ENCODE measurements at regions of chr3 and their contacts with region 1.

Region 1: GRCh38 chr3:138180375-138181029 is 5.8 kb upstream of the DBR1 start:
- DNase-seq: no peak
- ATAC-seq: peak; percentile 94
- H3K4me3 ChIP-seq: no peak overlapping the region
- H3K27ac ChIP-seq: no peak overlapping the region
- H3K4me1 ChIP-seq: no peaks in the 10 kb centered on the region
- H3K27me3 ChIP-seq: peaks cover 0 to 2% of the 10 kb centered on the region in 2 experiments; a peak in 1 of 4 replicates
- CTCF ChIP-seq: peak; percentile 53 to 82 (median 53); a peak in 4 of 6 replicates
- EP300 ChIP-seq: no peak
- POLR2A ChIP-seq: no peak
- RAD21 ChIP-seq: peak; percentile 87

Region 2: DNA sequence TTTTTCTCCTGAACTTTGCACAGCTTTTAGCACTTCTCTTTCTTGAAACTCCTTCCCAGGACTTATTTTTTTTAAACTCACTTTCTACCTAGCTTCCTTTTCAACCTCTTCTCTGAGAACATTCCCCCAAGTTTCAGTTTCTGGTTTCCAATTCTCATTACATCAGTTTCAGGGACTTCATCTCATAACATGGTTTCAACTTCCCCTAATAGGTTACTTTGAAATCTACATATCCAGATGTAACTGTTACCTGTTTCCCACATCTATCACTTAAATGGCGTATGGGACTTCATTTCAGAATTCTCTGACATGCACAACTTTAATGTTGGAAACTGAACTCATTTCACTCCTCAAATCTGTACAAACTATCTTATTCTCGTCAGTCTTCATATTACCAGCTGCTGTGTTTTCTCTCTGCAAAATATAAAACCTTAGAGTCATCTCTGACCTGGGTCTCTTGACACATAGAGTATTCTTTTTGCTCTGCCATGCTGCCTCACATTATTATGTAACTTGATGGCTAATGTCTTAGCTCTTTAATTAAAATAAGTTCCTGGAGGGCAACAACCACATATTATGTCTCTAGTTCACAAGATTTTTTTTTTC is 90.8 kb after region 1 on chr3:
- CTCF ChIA-PET with region 1: no interaction called
- POLR2A ChIA-PET with region 1: no interaction called
- RAD21 ChIA-PET with region 1: no interaction called
- SMC1A ChIA-PET with region 1: interaction called, 5 read pairs
- in situ Hi-C with region 1: no loop called
- intact Hi-C with region 1: loop called (anchors 5 kb)
- DNase-seq: peak; percentile 24
- ATAC-seq: peak; percentile 81
- H3K4me3 ChIP-seq: no peak overlapping the region
- H3K27ac ChIP-seq: peak overlapping the region; percentile 31; the same call in 1 of the 2 replicates
- H3K4me1 ChIP-seq: peaks cover 11% of the 10 kb centered on the region
- H3K27me3 ChIP-seq: no peaks in the 10 kb centered on the region
- CTCF ChIP-seq: no peak
- EP300 ChIP-seq: no peak
- POLR2A ChIP-seq: no peak
- RAD21 ChIP-seq: no peak

Region 3: DNA sequence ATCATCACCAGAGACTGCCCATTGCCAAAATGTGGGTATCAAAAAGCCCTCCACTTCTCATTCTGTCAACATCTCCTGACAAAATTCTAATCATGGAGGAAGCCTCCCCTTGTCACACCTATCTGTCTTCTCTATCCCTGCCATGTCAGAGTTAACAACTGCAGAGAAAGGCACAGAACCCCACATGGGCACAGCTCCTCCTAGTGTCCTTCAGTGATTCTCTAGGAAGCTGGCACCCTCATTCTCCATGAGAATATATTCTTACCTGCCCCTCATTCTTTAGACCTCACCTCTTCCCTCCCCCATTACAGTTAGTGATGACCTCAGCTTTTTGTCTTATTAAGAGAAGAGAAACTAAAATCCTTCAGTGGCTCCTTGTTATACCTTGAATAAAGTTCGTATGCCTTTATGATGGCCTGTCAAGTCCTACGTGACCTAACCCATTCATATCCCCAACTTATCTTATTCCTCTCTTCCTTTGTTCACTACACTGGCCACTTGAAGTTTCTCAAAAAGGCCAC is 104.5 kb after region 1 on chr3:
- CTCF ChIA-PET with region 1: interaction called, 11 read pairs
- POLR2A ChIA-PET with region 1: no interaction called
- RAD21 ChIA-PET with region 1: no interaction called
- SMC1A ChIA-PET with region 1: interaction called, 3 read pairs
- in situ Hi-C with region 1: no loop called
- intact Hi-C with region 1: no loop called
- DNase-seq: no peak
- ATAC-seq: no peak
- H3K4me3 ChIP-seq: no peak overlapping the region
- H3K27ac ChIP-seq: no peak overlapping the region
- H3K4me1 ChIP-seq: no peaks in the 10 kb centered on the region
- H3K27me3 ChIP-seq: no peaks in the 10 kb centered on the region
- CTCF ChIP-seq: peak in 1 of 3 experiments; percentile 10; a peak in 2 of 6 replicates
- EP300 ChIP-seq: no peak
- POLR2A ChIP-seq: no peak
- RAD21 ChIP-seq: peak; percentile 37; the same call in 1 of the 2 replicates

Region 4: DNA sequence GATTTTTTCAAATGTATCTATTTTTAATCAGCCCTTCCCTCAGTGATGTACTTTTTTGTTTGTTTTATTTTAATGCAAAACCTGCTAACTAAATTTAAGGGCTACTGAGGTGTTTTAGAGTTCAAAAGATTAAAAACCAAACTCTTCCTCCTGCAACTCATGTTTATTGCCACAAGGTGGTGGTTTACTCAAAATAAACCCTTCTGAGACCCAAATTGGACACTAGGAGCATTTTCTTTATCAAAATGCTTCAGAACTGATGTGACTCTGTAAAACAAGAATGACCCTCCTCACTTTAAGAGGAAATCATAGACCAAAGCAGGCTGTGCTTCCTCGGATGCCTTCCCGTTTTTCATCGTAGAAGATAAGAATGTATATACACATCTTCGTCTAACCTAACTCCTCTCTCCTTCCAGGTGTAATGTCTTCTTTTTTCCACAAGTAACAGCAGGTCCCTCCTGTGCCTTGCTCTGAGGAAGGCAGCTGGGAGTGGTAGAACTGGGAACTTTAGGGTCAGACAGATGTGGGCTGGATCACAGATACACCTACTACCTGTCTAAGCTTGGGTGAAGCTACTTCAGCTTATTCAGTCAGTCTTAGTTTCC is 152.1 kb after region 1 on chr3:
- CTCF ChIA-PET with region 1: interaction called, 5 read pairs
- POLR2A ChIA-PET with region 1: no interaction called
- RAD21 ChIA-PET with region 1: no interaction called
- SMC1A ChIA-PET with region 1: no interaction called
- in situ Hi-C with region 1: no loop called
- intact Hi-C with region 1: loop called (anchors 2 kb)
- DNase-seq: no peak
- ATAC-seq: no peak
- H3K4me3 ChIP-seq: no peak overlapping the region
- H3K27ac ChIP-seq: no peak overlapping the region
- H3K4me1 ChIP-seq: peaks cover 7% of the 10 kb centered on the region
- H3K27me3 ChIP-seq: peaks cover 2 to 16% of the 10 kb centered on the region in 2 experiments; a peak in 3 of 4 replicates
- CTCF ChIP-seq: peak; percentile 24 to 49 (median 42); a peak in 5 of 6 replicates
- EP300 ChIP-seq: no peak
- POLR2A ChIP-seq: no peak
- RAD21 ChIP-seq: peak; percentile 64

Measured in GM12878 (cell line).